BJ (cell line): ENCODE measurements at regions of chr10 and their contacts with region 1.

Region 1: GRCh38 chr10:10792681-10793080 is 225.0 kb upstream of the CELF2 start:
- DNase-seq: peak; percentile 60
- H3K4me3 ChIP-seq: no peak overlapping the region
- H3K27me3 ChIP-seq: no peaks in the 10 kb centered on the region
- CTCF ChIP-seq: no peak

Region 2: GRCh38 chr10:10818082-10818481 is 25.4 kb after region 1 on chr10:
- CTCF ChIA-PET with region 1: no interaction called
- POLR2A ChIA-PET with region 1: interaction called, 13 read pairs
- DNase-seq: peak; percentile 66
- H3K4me3 ChIP-seq: no peak overlapping the region
- H3K27me3 ChIP-seq: no peaks in the 10 kb centered on the region
- CTCF ChIP-seq: no peak